ENCODE measurements at regions of chr18 and their contacts with region 1.

Region 1: DNA sequence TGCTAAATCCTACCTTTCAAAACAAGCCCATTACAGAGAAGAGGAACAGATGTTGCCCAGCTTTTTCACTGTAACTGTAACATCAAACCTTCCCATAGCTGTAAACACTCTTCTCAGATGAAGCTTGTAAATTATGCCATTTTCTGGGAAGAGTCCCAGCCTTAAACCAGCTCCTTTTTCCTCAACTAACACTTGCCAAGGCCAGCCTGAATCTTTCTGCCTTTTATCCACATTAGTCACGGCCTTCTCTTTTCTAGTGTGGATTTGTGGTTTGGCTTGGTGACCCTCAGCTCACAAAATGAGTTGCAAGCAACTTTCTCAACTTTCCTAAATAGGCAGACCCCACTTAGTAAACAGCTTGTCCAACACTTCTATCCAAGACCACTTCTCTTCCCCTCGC is 90.2 kb downstream of the CABLES1 start:
- DNase-seq: no peak
- ATAC-seq: no peak
- H3K4me3 ChIP-seq: no peak overlapping the region
- H3K4me3 Mint-ChIP-seq: peak overlapping the region; percentile 6
- H3K27ac ChIP-seq: no peak overlapping the region
- H3K27ac Mint-ChIP-seq: peak overlapping the region; percentile 65
- H3K4me1 ChIP-seq: peaks cover 26 to 32% of the 10 kb centered on the region in 2 donors
- H3K4me1 Mint-ChIP-seq: peaks cover 58% of the 10 kb centered on the region
- H3K27me3 ChIP-seq: no peaks in the 10 kb centered on the region
- H3K27me3 Mint-ChIP-seq: peaks cover 3% of the 10 kb centered on the region
- CTCF ChIP-seq: no peak

Region 2: DNA sequence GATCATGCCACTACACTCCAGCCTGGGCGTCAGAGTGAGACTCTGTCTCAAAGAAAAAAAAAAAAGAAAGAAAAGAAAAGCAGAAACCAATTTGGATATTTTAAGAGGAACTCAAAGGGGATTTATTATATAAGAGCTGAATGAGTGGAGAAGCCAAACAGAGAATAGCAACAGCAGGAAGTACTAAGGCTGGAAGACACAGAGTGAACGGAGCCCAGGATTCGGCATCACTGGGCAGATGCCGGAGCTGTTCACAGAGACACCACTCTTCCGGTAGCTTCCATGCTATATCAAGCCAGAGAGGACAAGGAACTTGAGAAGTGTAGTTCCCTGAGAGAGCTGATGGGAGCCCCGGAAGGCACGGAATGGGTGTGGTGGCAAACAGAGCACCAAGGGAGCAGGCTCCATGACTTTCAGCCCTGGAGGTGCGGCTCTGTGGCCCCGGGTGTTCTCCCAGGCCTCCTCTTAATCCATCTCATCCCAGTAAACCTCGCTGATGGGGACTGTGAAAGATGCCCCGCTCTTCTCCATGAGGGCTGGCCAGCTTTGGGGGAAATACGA is 137.1 kb before region 1 on chr18:
- CTCF ChIA-PET with region 1: no interaction called
- POLR2A ChIA-PET with region 1: no interaction called
- intact Hi-C with region 1: no loop called
- DNase-seq: no peak
- ATAC-seq: no peak
- H3K4me3 ChIP-seq: no peak overlapping the region
- H3K4me3 Mint-ChIP-seq: no peak overlapping the region
- H3K27ac ChIP-seq: no peak overlapping the region
- H3K27ac Mint-ChIP-seq: no peak overlapping the region
- H3K4me1 ChIP-seq: peaks cover 8 to 14% of the 10 kb centered on the region in 2 donors
- H3K4me1 Mint-ChIP-seq: peaks cover 14% of the 10 kb centered on the region
- H3K27me3 ChIP-seq: no peaks in the 10 kb centered on the region
- H3K27me3 Mint-ChIP-seq: peaks cover 10% of the 10 kb centered on the region
- CTCF ChIP-seq: no peak

Region 3: GRCh38 chr18:23207191-23207955 is 18.1 kb before region 1 on chr18:
- CTCF ChIA-PET with region 1: no interaction called
- POLR2A ChIA-PET with region 1: interaction called, 3 read pairs
- intact Hi-C with region 1: loop called (anchors 2 kb)
- DNase-seq: no peak
- ATAC-seq: no peak
- H3K4me3 ChIP-seq: no peak overlapping the region
- H3K4me3 Mint-ChIP-seq: no peak overlapping the region
- H3K27ac ChIP-seq: no peak overlapping the region
- H3K27ac Mint-ChIP-seq: no peak overlapping the region
- H3K4me1 ChIP-seq: no peaks in the 10 kb centered on the region
- H3K4me1 Mint-ChIP-seq: peaks cover 8% of the 10 kb centered on the region
- H3K27me3 ChIP-seq: peaks cover 0 to 8% (median 0%) of the 10 kb centered on the region in 4 experiments
- H3K27me3 Mint-ChIP-seq: peaks cover 22% of the 10 kb centered on the region
- CTCF ChIP-seq: peak; percentile 19

Region 4: GRCh38 chr18:23283916-23284430 is 58.5 kb after region 1 on chr18:
- CTCF ChIA-PET with region 1: no interaction called
- POLR2A ChIA-PET with region 1: interaction called, 13 read pairs
- intact Hi-C with region 1: no loop called
- DNase-seq: no peak
- ATAC-seq: peak; percentile 28
- H3K4me3 ChIP-seq: no peak overlapping the region
- H3K4me3 Mint-ChIP-seq: no peak overlapping the region
- H3K27ac ChIP-seq: no peak overlapping the region
- H3K27ac Mint-ChIP-seq: peak overlapping the region; percentile 46
- H3K4me1 ChIP-seq: no peaks in the 10 kb centered on the region
- H3K4me1 Mint-ChIP-seq: peaks cover 10% of the 10 kb centered on the region
- H3K27me3 ChIP-seq: no peaks in the 10 kb centered on the region
- H3K27me3 Mint-ChIP-seq: no peaks in the 10 kb centered on the region
- CTCF ChIP-seq: no peak